A549 (cell line): ENCODE measurements at regions of chr2 and their contacts with region 1.

Region 1: GRCh38 chr2:66434679-66435548 is at the start of gene MEIS1:
- DNase-seq: peak; percentile 93 to 95
- ATAC-seq: peak; percentile 87 to 90
- H3K4me3 ChIP-seq: peak within 1 kb of the TSS; percentile 77
- H3K27ac ChIP-seq: peak within 1 kb of the TSS; percentile 70 to 86
- H3K4me1 ChIP-seq: peaks cover 7% of the 10 kb centered on the region; the same call in 1 of the 3 replicates
- CTCF ChIP-seq: no peak
- EP300 ChIP-seq: no peak
- POLR2A ChIP-seq: peak; percentile 91
- RAD21 ChIP-seq: no peak
- polyA plus RNA-seq, gene MEIS1: 2.9 and 4.2 TPM in 2 replicates

Region 2: DNA sequence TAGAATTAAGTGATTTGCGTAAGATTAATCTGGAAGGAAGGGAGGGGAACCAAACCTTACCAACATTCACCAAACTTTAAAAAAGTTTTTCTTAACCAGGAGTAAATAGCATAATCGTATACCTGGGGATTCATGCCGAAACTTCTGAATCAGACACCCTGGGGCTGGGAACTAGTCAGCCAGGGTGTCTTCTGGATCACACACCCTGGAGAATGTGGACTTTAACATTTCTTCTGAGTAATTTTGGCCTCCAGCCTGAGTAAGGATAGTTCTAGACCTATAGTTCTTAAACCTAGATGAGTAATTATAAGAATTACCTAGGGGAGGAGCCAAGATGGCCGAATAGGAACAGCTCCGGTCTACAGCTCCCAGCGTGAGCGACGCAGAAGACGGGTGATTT is 44.1 kb before region 1 on chr2:
- CTCF ChIA-PET with region 1: no interaction called
- POLR2A ChIA-PET with region 1: no interaction called
- DNase-seq: no peak
- ATAC-seq: peak; percentile 47 to 56; a peak in 4 of 6 replicates
- H3K4me3 ChIP-seq: peak overlapping the region; percentile 36
- H3K27ac ChIP-seq: no peak overlapping the region
- H3K4me1 ChIP-seq: peaks cover 4% of the 10 kb centered on the region; the same call in 1 of the 3 replicates
- CTCF ChIP-seq: no peak
- EP300 ChIP-seq: no peak
- POLR2A ChIP-seq: no peak
- RAD21 ChIP-seq: no peak

Region 3: GRCh38 chr2:66423391-66424124 is 11.4 kb before region 1 on chr2:
- CTCF ChIA-PET with region 1: interaction called, 17 read pairs
- POLR2A ChIA-PET with region 1: no interaction called
- DNase-seq: no peak
- ATAC-seq: no peak
- H3K4me3 ChIP-seq: no peak overlapping the region
- H3K27ac ChIP-seq: no peak overlapping the region
- H3K4me1 ChIP-seq: peaks cover 21% of the 10 kb centered on the region; the same call in 2 of the 3 replicates
- CTCF ChIP-seq: no peak
- EP300 ChIP-seq: no peak
- POLR2A ChIP-seq: no peak
- RAD21 ChIP-seq: no peak